A673 (cell line): ENCODE measurements at regions of chr4 and their contacts with region 1.

Region 1: DNA sequence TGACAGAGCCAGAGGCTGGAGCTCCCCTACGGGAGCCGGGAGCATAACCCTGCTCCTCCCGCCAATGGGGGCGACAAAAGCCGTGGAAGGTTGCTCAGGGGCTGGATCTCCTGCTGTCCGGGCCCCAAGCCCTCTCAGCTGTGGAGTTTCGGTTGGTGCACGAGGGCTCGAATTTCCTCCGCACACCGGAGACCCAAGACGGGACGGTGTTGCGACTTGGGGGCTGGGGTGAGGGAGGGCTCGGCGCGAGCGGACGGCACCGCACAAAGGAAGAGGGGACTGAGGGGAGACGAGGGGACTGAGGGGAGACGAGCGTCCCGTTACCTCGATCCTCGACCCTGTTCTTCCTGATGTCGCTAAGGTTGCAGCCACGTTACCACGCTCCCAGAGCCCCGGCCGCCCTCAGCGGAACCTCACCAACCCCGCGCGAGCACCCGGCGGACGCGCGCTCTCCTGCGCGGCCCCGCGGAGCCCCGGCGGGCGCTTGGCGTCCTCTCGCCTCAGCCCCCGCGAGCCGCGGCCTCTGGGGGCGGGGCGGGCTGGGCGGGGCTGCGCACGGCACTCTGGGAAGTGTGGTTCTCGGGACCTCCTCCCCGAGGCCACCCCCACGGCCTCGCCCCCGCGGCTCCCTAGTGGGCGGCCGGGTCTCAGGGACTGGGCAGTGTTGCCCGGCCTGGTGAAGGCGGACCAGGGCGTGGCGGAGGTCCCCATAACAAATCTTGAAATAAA is at the start of gene KLHL8:
- DNase-seq: peak; percentile 84
- H3K4me3 ChIP-seq: peak within 1 kb of the TSS; percentile 90
- H3K27ac ChIP-seq: peak within 1 kb of the TSS; percentile 92
- H3K4me1 ChIP-seq: no peaks in the 10 kb centered on the region
- H3K27me3 ChIP-seq: no peaks in the 10 kb centered on the region
- CTCF ChIP-seq: no peak
- total RNA-seq, gene KLHL8: 14.8 and 15.4 TPM in 2 replicates

Region 2: GRCh38 chr4:86898562-86898961 is 321.7 kb before region 1 on chr4:
- CTCF ChIA-PET with region 1: no interaction called
- POLR2A ChIA-PET with region 1: no interaction called
- intact Hi-C with region 1: no loop called
- DNase-seq: no peak
- H3K4me3 ChIP-seq: no peak overlapping the region
- H3K27ac ChIP-seq: no peak overlapping the region
- H3K4me1 ChIP-seq: peaks cover 8% of the 10 kb centered on the region
- H3K27me3 ChIP-seq: no peaks in the 10 kb centered on the region
- CTCF ChIP-seq: peak; percentile 31; the same call in 1 of the 2 replicates

Region 3: DNA sequence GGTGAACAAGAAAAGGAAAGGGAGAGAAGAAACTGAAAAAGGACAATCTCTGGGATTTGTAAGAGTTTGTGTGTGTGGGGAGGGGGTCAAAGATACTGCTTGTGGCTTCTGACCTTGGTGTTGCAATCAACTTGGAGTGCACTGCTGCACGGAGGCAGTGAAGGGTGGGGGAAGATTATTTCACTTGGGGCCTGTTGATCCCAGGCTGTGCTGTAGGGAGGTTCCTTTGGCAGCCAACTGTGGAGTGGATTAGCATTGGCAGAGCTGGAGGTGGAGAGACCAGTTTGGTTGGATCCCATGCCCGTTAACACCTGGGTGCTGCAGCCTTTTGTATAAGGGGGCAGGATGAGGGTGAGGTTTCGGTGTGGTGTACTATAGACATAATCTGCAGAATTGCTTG is 247.3 kb before region 1 on chr4:
- CTCF ChIA-PET with region 1: no interaction called
- POLR2A ChIA-PET with region 1: no interaction called
- intact Hi-C with region 1: no loop called
- DNase-seq: no peak
- H3K4me3 ChIP-seq: no peak overlapping the region
- H3K27ac ChIP-seq: peak overlapping the region; percentile 96
- H3K4me1 ChIP-seq: peaks cover 72% of the 10 kb centered on the region
- H3K27me3 ChIP-seq: no peaks in the 10 kb centered on the region
- CTCF ChIP-seq: no peak

Region 4: GRCh38 chr4:87150498-87151261 is 69.6 kb before region 1 on chr4:
- CTCF ChIA-PET with region 1: no interaction called
- POLR2A ChIA-PET with region 1: no interaction called
- intact Hi-C with region 1: loop called (anchors 5 kb)
- DNase-seq: peak; percentile 74
- H3K4me3 ChIP-seq: no peak overlapping the region
- H3K27ac ChIP-seq: no peak overlapping the region
- H3K4me1 ChIP-seq: peaks cover 8% of the 10 kb centered on the region
- H3K27me3 ChIP-seq: no peaks in the 10 kb centered on the region
- CTCF ChIP-seq: peak; percentile 70

Region 5: DNA sequence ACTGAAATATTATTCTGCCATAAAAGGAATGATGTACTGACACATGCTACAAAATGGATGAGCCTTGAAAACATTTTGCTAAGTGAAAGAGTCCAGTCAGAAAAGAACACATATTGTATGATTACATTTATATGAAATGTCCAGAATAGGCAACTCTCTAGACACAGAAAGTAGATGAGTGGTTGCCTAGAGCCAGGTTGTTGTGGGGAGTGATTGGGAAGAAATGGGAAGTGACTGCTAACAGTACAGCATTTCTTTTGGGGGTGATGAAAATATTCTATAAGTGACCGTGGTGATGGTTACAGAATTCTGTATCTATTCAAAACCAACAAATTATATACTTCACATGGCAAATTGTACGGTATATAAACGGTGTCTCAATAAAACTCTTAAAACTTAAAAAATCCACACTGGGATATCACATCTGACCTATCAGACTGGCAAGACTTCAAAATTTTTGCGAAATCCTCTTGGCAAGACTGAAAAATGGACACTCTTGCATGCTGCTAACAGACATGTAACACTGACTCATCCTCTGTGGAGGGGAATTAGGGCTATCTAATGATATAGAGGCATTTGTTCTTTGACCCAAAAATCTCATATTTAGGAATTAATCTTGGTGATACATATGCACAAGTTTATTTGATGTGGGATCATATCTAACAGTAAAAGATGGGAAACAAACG is 1765.0 kb after region 1 on chr4:
- CTCF ChIA-PET with region 1: no interaction called
- POLR2A ChIA-PET with region 1: no interaction called
- intact Hi-C with region 1: no loop called
- DNase-seq: no peak
- H3K4me3 ChIP-seq: no peak overlapping the region
- H3K27ac ChIP-seq: no peak overlapping the region
- H3K4me1 ChIP-seq: no peaks in the 10 kb centered on the region
- H3K27me3 ChIP-seq: no peaks in the 10 kb centered on the region
- CTCF ChIP-seq: no peak